Activated T-helper 1 cell treated with anti-CD3 and anti-CD28 coated beads, Interleukin-12 subunit alpha, Interleukin-12 subunit beta, Interleukin-2, Interleukin-4 antibody, amounts not matched to agents 30 ng/mL and 10 ng/mL and 1 ng/mL, durations not matched to agents 14 hours and 24 hours and 36 hours (primary cell): ENCODE measurements at regions of chr13 and their contacts with region 1.

Region 1: DNA sequence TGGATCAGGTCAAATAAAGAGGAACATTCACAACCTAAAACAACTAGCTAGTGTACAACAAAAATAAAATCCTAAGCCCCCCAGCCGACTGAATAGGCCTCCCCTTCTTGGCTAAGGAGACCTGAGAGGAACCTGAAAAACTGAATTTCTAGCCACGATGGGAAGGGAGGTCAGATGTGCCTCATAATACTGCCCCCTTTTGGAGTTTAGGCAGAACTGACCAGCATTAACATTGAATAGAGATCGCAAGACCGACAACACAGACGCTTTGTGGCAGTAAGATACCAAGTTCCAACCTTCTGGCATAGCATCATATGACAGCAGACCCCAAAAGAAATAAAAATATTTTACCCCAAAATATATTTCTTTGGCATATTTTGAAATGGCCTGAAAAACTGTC is 15.9 kb downstream of the CBY2 start:
- DNase-seq: no peak
- H3K4me3 Mint-ChIP-seq: no peak overlapping the region
- H3K27ac Mint-ChIP-seq: no peak overlapping the region
- H3K4me1 Mint-ChIP-seq: no peaks in the 10 kb centered on the region
- H3K27me3 Mint-ChIP-seq: no peaks in the 10 kb centered on the region

Region 2: GRCh38 chr13:45623515-45624090 is 94.5 kb before region 1 on chr13:
- intact Hi-C with region 1: loop called (anchors 1 kb)
- DNase-seq: no peak
- H3K4me3 Mint-ChIP-seq: no peak overlapping the region
- H3K27ac Mint-ChIP-seq: no peak overlapping the region
- H3K4me1 Mint-ChIP-seq: no peaks in the 10 kb centered on the region
- H3K27me3 Mint-ChIP-seq: peaks cover 14% of the 10 kb centered on the region